Activated CD4-positive, alpha-beta memory T cell treated with anti-CD3 and anti-CD28 coated beads for 36 hours (primary cell): ENCODE measurements at regions of chr17 and their contacts with region 1.

Region 1: GRCh38 chr17:21043286-21044232 is 748 bp upstream of the USP22 start:
- DNase-seq: peak; percentile 98
- H3K4me3 Mint-ChIP-seq: peak overlapping the region; percentile 78
- H3K27ac Mint-ChIP-seq: peak overlapping the region; percentile 90
- H3K4me1 Mint-ChIP-seq: peaks cover 24% of the 10 kb centered on the region
- H3K27me3 Mint-ChIP-seq: no peaks in the 10 kb centered on the region

Region 2: GRCh38 chr17:21019976-21020586 is 23.5 kb before region 1 on chr17:
- CTCF ChIA-PET with region 1: interaction called, 15 read pairs
- POLR2A ChIA-PET with region 1: interaction called, 3 read pairs
- intact Hi-C with region 1: no loop called
- DNase-seq: peak; percentile 62
- H3K4me3 Mint-ChIP-seq: no peak overlapping the region
- H3K27ac Mint-ChIP-seq: no peak overlapping the region
- H3K4me1 Mint-ChIP-seq: peaks cover 32% of the 10 kb centered on the region
- H3K27me3 Mint-ChIP-seq: no peaks in the 10 kb centered on the region

Region 3: GRCh38 chr17:21081967-21082366 is 38.4 kb after region 1 on chr17:
- CTCF ChIA-PET with region 1: no interaction called
- POLR2A ChIA-PET with region 1: no interaction called
- intact Hi-C with region 1: no loop called
- DNase-seq: no peak
- H3K4me3 Mint-ChIP-seq: no peak overlapping the region
- H3K27ac Mint-ChIP-seq: no peak overlapping the region
- H3K4me1 Mint-ChIP-seq: no peaks in the 10 kb centered on the region
- H3K27me3 Mint-ChIP-seq: peaks cover 9% of the 10 kb centered on the region

Region 4: DNA sequence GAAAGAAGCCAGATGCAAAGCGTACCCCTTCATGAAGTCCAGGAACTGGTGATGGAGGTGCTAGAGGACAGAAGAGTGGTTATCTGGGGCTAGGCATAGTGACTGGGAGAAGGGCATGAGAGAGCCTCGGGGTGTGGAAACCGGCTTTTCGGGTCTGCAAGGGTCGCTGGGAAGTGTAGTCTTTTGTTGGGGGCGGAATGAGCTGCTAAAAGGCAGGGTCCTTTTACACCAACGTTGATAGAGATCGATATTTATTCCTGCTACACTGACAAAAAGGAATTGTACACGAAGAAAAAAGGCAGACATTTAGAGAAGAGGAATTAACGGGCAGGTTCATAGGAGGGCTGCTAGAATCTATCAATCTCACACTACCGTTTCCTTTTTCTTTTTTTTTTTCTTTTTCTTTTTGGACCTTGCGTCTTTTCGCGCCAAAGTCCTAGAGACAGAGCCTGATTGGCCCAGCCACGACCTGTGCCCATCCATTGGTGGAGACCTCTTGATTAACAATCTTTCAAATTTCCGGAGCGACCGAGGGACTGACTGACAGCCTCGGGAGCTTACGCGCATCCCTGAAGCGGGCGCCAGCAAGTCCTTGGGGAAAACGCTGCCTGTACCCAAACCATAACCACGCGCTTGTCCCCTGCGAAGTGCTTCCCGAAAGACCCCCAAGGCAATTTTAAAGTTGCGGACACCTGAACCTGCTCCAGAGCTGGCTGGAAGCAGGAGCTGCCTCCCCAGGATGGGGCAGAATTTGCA is 55.6 kb after region 1 on chr17:
- CTCF ChIA-PET with region 1: interaction called, 40 read pairs
- POLR2A ChIA-PET with region 1: interaction called, 26 read pairs
- intact Hi-C with region 1: loop called (anchors 1 kb)
- DNase-seq: peak; percentile 87
- H3K4me3 Mint-ChIP-seq: peak overlapping the region; percentile 97
- H3K27ac Mint-ChIP-seq: peak overlapping the region; percentile 88
- H3K4me1 Mint-ChIP-seq: peaks cover 4% of the 10 kb centered on the region
- H3K27me3 Mint-ChIP-seq: no peaks in the 10 kb centered on the region

Region 5: DNA sequence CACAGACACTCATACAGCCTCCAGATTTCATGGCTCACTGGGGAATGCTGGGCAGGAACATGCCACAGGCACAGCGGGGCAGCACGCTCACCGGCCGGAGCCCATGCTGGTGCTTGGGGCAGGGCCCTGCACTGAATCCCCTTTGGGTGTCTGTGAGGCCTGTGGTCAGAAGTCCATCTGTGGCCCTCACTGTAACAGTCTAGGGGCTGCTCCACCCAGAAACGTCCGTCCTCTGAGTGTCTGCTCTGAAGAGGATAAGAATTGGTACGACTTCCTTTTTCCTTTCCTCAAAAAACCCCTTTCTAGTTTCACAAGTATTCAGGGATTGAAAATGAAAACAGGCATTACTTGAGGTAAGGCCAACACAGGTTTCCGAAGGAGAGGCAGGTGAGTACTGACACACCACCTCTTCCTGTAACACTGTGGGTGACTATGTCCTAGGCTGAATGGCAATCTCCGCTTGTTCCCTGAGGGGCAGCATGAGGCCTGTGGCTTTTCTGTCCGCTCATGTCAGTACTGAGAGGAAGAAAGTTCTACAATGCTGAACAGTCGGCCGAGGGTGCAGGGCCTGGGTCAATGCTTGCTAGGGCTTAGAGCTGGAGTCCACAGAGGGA is 127.9 kb after region 1 on chr17:
- CTCF ChIA-PET with region 1: no interaction called
- POLR2A ChIA-PET with region 1: no interaction called
- intact Hi-C with region 1: no loop called
- DNase-seq: peak; percentile 19
- H3K4me3 Mint-ChIP-seq: no peak overlapping the region
- H3K27ac Mint-ChIP-seq: no peak overlapping the region
- H3K4me1 Mint-ChIP-seq: peaks cover 20% of the 10 kb centered on the region
- H3K27me3 Mint-ChIP-seq: no peaks in the 10 kb centered on the region

Region 6: GRCh38 chr17:21214015-21214776 is 170.6 kb after region 1 on chr17 and contains the start of gene TMEM11:
- CTCF ChIA-PET with region 1: interaction called, 3 read pairs
- POLR2A ChIA-PET with region 1: interaction called, 7 read pairs
- intact Hi-C with region 1: loop called (anchors 1 kb)
- DNase-seq: peak; percentile 96
- H3K4me3 Mint-ChIP-seq: peak within 1 kb of the TSS; percentile 84
- H3K27ac Mint-ChIP-seq: peak within 1 kb of the TSS; percentile 91
- H3K4me1 Mint-ChIP-seq: peaks cover 68% of the 10 kb centered on the region
- H3K27me3 Mint-ChIP-seq: no peaks in the 10 kb centered on the region
- total RNA-seq, gene TMEM11: 24.0 to 27.2 TPM